ENCODE measurements at regions of chr3 and their contacts with region 1.

Region 1: GRCh38 chr3:111326144-111326995 is 215.6 kb upstream of the CD96 start:
- DNase-seq: peak; percentile 65
- ATAC-seq: peak; percentile 69
- H3K4me3 Mint-ChIP-seq: no peak overlapping the region
- H3K27ac Mint-ChIP-seq: peak overlapping the region; percentile 41
- H3K4me1 Mint-ChIP-seq: peaks cover 34% of the 10 kb centered on the region
- H3K27me3 Mint-ChIP-seq: no peaks in the 10 kb centered on the region
- CTCF ChIP-seq: no peak

Region 2: DNA sequence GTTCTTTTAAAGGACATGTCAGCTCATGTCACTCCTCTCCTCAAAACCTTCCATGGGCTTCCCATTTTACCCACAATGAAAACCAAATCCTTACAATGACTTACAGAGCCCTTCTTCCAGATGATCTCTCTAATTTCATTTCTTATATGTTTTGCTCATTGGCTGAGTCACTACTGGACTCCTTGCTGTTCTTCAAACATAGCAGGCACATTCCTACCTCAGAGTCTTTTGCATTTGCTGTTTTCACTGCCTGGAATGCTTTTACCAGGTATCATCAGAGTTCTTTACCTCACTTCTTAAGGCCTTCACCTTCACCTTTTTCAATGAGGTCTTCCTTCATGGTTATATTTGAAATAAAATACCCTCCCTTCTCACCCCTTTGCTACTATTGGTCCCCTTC is 197.5 kb before region 1 on chr3:
- CTCF ChIA-PET with region 1: no interaction called
- POLR2A ChIA-PET with region 1: no interaction called
- intact Hi-C with region 1: no loop called
- DNase-seq: no peak
- ATAC-seq: no peak
- H3K4me3 Mint-ChIP-seq: no peak overlapping the region
- H3K27ac Mint-ChIP-seq: no peak overlapping the region
- H3K4me1 Mint-ChIP-seq: no peaks in the 10 kb centered on the region
- H3K27me3 Mint-ChIP-seq: no peaks in the 10 kb centered on the region
- CTCF ChIP-seq: no peak

Region 3: DNA sequence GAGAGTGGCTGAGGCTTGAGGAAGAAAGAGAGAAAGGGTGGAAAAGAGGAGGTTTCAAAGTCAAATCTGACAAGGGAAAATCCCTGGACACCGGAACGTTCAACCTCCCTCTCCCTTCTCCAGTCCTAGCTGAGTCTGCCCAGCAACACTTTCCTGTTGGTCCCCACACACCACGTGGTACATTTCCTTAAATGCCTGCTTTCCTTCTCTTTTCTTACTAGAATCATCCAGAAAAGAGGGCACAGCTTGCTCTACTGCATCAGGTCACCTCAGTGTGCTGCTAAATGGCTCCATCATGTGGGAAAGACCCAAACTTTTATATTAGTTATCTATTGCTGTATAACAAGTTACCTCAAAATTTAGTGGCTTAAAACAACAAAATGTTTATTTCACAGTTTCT is 73.6 kb before region 1 on chr3:
- CTCF ChIA-PET with region 1: no interaction called
- POLR2A ChIA-PET with region 1: no interaction called
- intact Hi-C with region 1: loop called (anchors 5 kb)
- DNase-seq: no peak
- ATAC-seq: no peak
- H3K4me3 Mint-ChIP-seq: no peak overlapping the region
- H3K27ac Mint-ChIP-seq: no peak overlapping the region
- H3K4me1 Mint-ChIP-seq: peaks cover 22% of the 10 kb centered on the region
- H3K27me3 Mint-ChIP-seq: peaks cover 2% of the 10 kb centered on the region
- CTCF ChIP-seq: no peak

Region 4: GRCh38 chr3:111285694-111286093 is 40.7 kb before region 1 on chr3:
- CTCF ChIA-PET with region 1: no interaction called
- POLR2A ChIA-PET with region 1: no interaction called
- intact Hi-C with region 1: no loop called
- DNase-seq: no peak
- ATAC-seq: no peak
- H3K4me3 Mint-ChIP-seq: no peak overlapping the region
- H3K27ac Mint-ChIP-seq: no peak overlapping the region
- H3K4me1 Mint-ChIP-seq: peaks cover 16% of the 10 kb centered on the region
- H3K27me3 Mint-ChIP-seq: no peaks in the 10 kb centered on the region
- CTCF ChIP-seq: no peak

Region 5: DNA sequence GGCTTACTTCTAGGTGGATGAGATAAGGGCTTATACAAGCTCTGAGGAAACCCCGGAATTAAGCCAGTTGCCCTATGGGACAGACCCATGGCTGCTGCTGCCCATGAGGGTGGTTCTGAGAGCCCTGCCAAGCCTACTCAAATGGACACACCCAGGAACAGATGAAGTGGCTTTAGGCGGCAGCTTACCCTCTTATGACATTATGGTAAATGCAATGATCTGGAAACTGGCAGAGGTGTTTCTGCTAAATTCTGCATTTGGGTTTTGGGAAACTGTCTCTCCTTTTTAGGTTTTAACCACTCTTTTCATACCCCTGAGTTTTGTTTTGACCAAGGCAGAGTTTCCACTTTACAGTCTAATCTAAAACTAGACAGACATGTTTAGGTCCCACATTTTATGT is 277.7 kb after region 1 on chr3:
- CTCF ChIA-PET with region 1: no interaction called
- POLR2A ChIA-PET with region 1: no interaction called
- intact Hi-C with region 1: loop called (anchors 10 kb)
- DNase-seq: peak; percentile 60
- ATAC-seq: peak; percentile 54
- H3K4me3 Mint-ChIP-seq: peak overlapping the region; percentile 12
- H3K27ac Mint-ChIP-seq: peak overlapping the region; percentile 93
- H3K4me1 Mint-ChIP-seq: peaks cover 84% of the 10 kb centered on the region
- H3K27me3 Mint-ChIP-seq: no peaks in the 10 kb centered on the region
- CTCF ChIP-seq: no peak